ENCODE measurements at regions of chrX and their contacts with region 1.

Region 1: DNA sequence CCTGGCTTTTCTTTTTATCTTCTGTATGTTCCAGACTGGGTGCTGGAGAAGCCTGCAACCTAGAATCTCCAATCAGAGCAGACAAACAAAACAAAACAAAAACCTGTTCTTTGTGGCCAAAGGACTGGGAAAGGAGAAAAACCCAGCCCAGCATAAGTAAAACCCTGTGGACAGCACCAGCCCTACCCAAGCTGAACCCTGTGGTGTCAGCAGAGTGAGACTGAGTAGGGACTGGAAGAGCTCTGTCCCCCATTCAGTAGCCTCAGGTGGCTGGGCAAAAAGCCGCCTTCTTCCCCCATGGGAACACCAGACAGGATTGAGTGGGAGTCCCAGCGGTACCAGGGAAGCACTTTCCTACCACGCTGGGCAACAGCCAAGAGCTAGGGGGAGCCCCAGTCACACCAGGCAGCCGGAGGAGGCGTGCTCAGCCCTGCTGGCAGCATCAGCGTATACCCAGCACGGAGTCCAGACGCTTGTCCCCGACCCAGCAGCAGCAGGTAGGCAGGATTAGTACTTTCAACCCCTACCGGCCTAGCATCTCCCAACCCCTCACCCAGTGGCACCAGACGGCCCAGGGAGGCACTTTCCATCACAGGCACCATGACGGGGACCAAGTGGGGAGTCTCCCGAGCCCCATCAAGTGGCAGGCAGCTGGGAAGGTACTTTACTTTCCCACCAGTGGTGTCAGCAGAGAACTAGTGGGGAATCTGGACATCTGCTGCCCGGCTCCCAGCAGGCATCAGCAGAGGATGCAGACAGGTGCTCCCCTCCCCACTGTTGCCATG is 8.6 kb upstream of the JADE3 start:
- DNase-seq: peak; percentile 85 to 91 (median 88)
- ATAC-seq: peak; percentile 99
- H3K4me3 ChIP-seq: no peak overlapping the region
- H3K27ac ChIP-seq: peak overlapping the region in 3 of 4 donors; percentile 10 to 80 (median 69)
- H3K4me1 ChIP-seq: peaks cover 3% of the 10 kb centered on the region
- H3K27me3 ChIP-seq: no peaks in the 10 kb centered on the region
- CTCF ChIP-seq: peak; percentile 39 to 92 (median 80)
- POLR2A ChIP-seq: no peak

Region 2: DNA sequence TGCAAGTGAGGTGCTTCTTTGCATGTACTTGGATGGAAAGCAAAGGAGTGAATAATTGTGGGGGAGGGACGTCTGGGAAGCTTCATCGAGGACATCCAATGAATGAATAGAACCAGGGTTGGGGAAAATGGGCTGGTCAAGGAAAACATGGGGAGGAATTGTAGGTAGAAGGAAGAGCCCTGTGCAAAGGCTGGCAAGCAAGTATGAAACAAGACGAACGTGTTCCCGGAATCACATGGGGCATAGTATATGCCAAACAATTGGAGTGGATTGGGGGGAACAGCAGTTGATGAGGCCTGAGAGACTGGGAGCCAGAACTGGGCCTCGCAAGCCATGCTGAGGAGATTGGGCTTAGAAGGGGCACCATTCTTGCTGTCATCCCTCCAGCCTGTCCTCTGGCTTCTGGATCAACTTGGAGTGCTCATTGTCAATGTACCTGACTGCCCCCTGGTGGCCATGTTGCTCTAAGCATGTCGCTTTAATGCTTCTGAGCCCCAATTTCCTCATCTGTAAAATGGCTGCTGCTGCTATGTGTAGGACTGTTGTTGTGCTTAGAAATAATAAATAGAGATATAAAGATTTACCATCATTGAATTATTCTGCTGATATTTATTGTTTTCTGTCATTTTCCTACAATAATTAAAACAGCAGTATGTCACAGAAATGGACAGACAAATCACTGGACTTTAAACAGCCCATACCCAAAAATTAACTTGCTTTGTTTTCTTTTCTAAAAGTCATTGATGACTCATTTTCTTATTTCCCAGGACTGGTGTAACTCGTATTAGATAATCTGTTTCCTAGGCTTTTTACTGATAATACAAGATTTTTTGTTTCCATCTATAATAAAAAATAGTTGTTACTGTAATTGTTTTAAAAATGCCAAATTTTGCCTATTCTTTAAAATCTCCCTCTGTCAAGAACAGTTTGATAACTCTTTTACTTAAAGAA is 75.0 kb after region 1 on chrX:
- intact Hi-C with region 1: loop called (anchors 10 kb)
- DNase-seq: peak; percentile 74 to 87 (median 78)
- ATAC-seq: peak; percentile 75
- H3K4me3 ChIP-seq: no peak overlapping the region
- H3K27ac ChIP-seq: peak overlapping the region in 1 of 4 donors; percentile 8
- H3K4me1 ChIP-seq: no peaks in the 10 kb centered on the region
- H3K27me3 ChIP-seq: no peaks in the 10 kb centered on the region
- CTCF ChIP-seq: peak; percentile 32 to 70 (median 57)
- POLR2A ChIP-seq: no peak

Region 3: DNA sequence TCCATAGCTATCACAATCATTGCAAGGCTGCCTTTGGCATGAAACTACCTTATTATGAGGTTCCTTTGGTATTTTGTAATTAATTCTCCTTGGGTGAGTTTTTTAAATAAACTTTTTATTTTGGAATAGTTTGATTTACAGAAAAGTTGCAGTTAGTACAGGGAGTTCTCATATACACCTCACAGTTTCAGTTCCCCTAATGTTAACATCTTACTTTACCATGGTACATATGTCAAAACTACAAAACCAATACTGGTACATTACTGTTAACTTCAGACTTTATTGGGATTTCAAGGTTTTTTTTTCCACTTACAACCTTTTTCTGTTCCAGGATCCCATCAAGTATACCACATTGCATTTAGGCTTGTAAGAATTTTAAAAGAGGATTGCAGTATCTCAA is 122.5 kb after region 1 on chrX:
- intact Hi-C with region 1: loop called (anchors 10 kb)
- DNase-seq: no peak
- ATAC-seq: no peak
- H3K4me3 ChIP-seq: no peak overlapping the region
- H3K27ac ChIP-seq: no peak overlapping the region
- H3K4me1 ChIP-seq: no peaks in the 10 kb centered on the region
- H3K27me3 ChIP-seq: no peaks in the 10 kb centered on the region
- CTCF ChIP-seq: no peak
- POLR2A ChIP-seq: no peak